ENCODE measurements at regions of chr16 and their contacts with region 1.

Region 1: GRCh38 chr16:4475880-4476788 is at the start of gene HMOX2:
- DNase-seq: peak; percentile 94
- H3K4me3 Mint-ChIP-seq: peak within 1 kb of the TSS; percentile 92
- H3K27ac Mint-ChIP-seq: peak within 1 kb of the TSS; percentile 91
- H3K4me1 Mint-ChIP-seq: peaks cover 49% of the 10 kb centered on the region
- H3K27me3 Mint-ChIP-seq: no peaks in the 10 kb centered on the region

Region 2: GRCh38 chr16:4487955-4488498 is 11.9 kb after region 1 on chr16:
- CTCF ChIA-PET with region 1: interaction called, 10 read pairs
- DNase-seq: peak; percentile 31
- H3K4me3 Mint-ChIP-seq: peak overlapping the region; percentile 64
- H3K27ac Mint-ChIP-seq: peak overlapping the region; percentile 96
- H3K4me1 Mint-ChIP-seq: peaks cover 69% of the 10 kb centered on the region
- H3K27me3 Mint-ChIP-seq: no peaks in the 10 kb centered on the region

Region 3: DNA sequence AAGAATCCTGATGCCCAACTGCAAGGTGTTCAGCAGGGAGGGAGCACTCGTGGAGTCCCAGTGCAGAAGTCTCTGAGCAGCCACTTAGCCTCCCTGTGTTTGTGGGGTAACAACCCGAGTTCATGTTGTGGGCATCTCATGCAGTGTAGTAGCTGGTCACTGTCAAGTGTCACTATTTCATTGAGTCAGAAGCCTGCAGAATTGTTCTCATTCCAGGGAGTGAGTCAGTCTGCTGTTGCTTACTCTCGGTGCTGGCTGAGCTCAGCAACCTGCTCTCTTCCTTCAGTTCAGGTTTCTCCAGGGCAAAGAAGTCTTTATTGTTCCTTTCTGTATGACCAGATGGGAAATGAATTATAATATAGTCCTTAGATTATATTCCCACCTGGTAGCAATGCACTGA is 24.1 kb after region 1 on chr16:
- CTCF ChIA-PET with region 1: interaction called, 67 read pairs
- DNase-seq: no peak
- H3K4me3 Mint-ChIP-seq: no peak overlapping the region
- H3K27ac Mint-ChIP-seq: no peak overlapping the region
- H3K4me1 Mint-ChIP-seq: peaks cover 67% of the 10 kb centered on the region
- H3K27me3 Mint-ChIP-seq: no peaks in the 10 kb centered on the region

Measured in activated naive CD4-positive, alpha-beta T cell treated with anti-CD3 and anti-CD28 coated beads, Interleukin-2, amount 10 ng/mL, durations not matched to agents 7 days and 5 days (primary cell).